ENCODE measurements at regions of chr6 and their contacts with region 1.

Region 1: DNA sequence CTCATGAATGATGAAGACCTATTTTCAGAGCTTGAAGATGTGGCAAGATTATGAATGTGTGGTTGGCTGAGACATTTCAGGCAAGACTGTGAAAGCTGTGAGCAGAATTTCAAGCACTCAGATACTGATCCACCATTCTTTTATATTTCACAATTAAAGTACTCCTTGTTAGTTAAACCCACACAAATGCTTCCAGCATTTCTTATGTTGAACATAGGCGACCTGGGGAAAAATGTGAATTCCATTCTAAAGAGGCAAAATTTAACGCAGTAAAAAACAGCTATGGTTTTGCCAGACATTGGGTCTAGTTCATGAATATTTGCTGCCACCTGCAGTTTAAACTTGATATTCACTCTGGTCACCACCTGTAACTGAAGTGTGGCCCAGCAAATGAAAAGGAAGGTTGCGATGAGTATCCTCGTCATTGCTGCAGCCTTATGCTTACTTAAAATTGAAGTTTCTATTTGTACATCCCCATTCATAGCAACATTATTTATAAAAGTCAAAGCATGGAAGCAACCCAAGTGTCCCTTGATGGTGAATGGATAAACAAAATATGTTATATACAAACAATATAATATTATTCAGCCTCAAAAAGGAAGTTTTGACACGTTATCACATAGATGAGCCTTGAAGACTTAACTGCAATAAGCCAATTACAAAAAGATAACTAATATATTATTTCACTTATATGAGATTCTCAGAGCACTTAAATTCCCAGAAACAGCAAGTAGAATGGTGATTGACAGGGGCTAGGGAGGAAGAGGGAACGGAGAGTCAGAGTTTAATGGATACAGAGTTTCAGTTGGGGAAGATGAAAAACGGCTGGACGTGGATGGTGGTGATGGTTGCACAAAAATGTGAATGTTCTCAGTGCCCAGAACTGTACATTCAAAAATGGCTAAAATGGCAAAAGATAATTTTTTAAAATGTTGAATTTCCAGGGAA is 32.4 kb upstream of the FAM184A start:
- DNase-seq: peak; percentile 59
- ATAC-seq: peak; percentile 85
- H3K4me3 Mint-ChIP-seq: no peak overlapping the region
- H3K27ac Mint-ChIP-seq: no peak overlapping the region
- H3K4me1 Mint-ChIP-seq: peaks cover 17% of the 10 kb centered on the region
- H3K27me3 Mint-ChIP-seq: peaks cover 4% of the 10 kb centered on the region

Region 2: GRCh38 chr6:118918326-118918725 is 192.5 kb before region 1 on chr6:
- CTCF ChIA-PET with region 1: no interaction called
- DNase-seq: no peak
- ATAC-seq: no peak
- H3K4me3 Mint-ChIP-seq: no peak overlapping the region
- H3K27ac Mint-ChIP-seq: no peak overlapping the region
- H3K4me1 Mint-ChIP-seq: peaks cover 3% of the 10 kb centered on the region
- H3K27me3 Mint-ChIP-seq: no peaks in the 10 kb centered on the region

Region 3: DNA sequence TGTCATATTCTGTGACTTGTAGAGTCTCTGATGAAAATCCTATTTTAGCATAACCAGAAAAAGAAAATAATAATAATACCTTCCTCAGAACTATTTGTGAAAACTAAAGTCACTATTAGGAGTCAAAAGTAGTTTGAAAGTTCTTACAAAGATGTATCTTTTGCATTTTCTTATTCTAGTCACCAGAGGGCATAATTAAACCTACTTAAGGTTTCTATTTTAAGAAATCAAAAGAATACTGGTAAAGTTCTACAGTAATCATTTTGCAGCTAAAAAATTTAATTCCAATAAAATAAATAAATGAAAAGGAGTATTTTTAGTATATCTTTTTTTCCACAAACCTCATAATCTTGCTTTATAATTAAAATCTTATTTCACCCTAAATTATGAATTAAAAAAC is 147.9 kb before region 1 on chr6:
- CTCF ChIA-PET with region 1: interaction called, 34 read pairs
- DNase-seq: no peak
- ATAC-seq: no peak
- H3K4me3 Mint-ChIP-seq: no peak overlapping the region
- H3K27ac Mint-ChIP-seq: no peak overlapping the region
- H3K4me1 Mint-ChIP-seq: peaks cover 12% of the 10 kb centered on the region
- H3K27me3 Mint-ChIP-seq: no peaks in the 10 kb centered on the region

Region 4: DNA sequence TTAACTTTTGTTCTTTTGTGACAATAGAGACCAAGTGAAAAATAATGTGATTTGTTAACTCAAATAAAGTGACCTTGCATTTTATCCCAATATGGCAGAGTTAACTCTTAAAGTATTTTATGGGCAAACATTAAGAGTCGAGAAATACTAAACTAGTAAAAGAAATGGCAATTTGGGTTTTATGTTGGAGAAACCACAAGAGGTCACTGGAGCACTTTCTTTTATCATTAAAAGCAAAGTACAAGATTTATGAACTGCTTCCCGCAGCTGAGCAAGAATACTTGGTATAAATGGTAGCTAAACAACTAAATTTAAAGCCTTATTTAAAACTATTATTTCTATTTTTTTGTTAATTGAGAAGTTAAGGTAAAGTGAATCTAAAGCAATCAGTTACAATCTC is 142.5 kb before region 1 on chr6:
- CTCF ChIA-PET with region 1: interaction called, 34 read pairs
- DNase-seq: no peak
- ATAC-seq: no peak
- H3K4me3 Mint-ChIP-seq: no peak overlapping the region
- H3K27ac Mint-ChIP-seq: no peak overlapping the region
- H3K4me1 Mint-ChIP-seq: no peaks in the 10 kb centered on the region
- H3K27me3 Mint-ChIP-seq: no peaks in the 10 kb centered on the region

Region 5: DNA sequence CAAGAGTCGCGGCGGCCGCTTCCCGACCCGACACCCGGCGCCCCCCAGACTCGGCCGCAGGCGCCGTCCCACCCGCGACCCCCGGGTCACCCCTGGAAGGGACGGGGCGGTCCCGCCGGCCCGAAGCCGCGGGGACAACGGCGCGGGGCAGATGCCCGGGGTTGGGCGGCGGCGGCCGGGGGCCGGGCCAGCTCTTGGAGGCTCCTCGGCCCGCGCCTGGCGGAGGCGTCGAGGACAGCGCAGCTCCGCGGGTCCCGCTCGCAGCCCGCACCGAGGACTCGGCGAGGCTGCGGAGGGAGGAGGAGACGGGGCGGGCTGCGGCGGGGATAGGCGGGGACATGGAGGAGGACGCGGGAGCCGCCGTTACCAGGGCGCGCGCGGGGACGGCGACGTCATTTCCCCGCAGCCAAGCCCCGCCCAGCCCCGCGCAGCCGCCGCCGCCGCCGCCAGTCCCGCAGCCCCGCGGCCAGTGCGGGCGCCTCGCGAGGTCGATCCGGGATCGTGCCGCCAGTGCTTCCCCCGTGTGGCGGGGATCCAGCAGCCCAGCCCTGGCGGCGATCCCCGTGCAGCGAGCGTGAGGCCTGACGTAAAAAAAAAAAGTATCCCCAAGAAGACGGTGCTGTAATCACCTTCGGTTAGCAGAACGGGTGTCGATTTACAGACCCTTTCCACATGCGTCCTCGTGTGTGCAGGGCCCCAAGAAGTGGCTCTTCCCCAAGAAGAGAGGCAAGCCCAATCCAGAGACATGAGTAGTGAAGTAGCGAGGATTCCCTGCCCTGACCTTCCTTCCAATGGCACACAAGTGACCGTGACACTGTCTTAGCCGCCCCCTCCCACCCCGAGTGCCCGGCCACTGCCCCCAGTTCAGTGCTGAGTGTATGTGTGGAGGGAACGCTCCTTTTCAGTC is 32.2 kb before region 1 on chr6 and contains the start of gene FAM184A:
- CTCF ChIA-PET with region 1: interaction called, 10 read pairs
- DNase-seq: peak; percentile 73
- ATAC-seq: peak; percentile 81
- H3K4me3 Mint-ChIP-seq: peak within 1 kb of the TSS; percentile 80
- H3K27ac Mint-ChIP-seq: peak within 1 kb of the TSS; percentile 79
- H3K4me1 Mint-ChIP-seq: peaks cover 27% of the 10 kb centered on the region
- H3K27me3 Mint-ChIP-seq: peaks cover 21% of the 10 kb centered on the region
- total RNA-seq, gene FAM184A: 3.7 to 6.0 TPM

Region 6: DNA sequence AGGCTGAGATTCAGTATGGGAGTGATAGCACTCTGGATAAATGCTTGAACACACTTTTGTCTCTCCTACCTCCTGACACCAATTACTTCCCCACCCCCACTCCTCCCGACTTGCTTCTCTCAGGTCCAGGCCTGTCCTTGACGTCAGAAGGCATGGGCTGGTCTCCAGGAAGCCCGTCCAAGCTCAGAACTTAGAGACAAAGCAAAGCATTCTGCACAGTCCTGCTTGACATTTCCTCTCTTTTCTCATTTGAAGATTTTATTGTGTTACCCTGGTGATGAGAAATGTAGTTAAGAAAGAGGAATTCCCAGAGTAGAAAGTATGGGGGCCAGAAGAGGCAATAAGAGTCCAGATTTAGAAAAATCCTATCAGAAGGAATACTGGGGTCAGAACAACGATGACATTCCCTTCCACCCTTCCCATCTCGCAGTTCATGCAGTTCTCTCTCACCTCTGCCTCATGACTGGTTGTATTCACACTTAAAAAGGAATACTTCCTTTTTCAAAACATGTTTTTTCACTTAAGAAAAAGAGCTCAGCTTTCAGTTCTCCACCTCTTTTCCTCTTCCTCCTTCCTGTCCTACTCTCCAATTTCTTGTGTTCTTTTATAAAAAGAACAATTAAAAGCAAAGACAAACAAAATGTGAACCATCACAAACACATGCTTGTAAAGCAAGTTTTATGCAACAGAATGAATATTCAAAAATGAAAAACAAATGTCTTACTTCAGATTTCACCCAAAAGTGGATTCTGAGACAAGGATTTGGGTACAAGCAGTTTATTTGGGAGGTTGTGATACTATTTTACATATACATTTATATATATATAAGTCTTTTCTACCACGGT is 13.9 kb before region 1 on chr6:
- CTCF ChIA-PET with region 1: interaction called, 11 read pairs
- DNase-seq: no peak
- ATAC-seq: no peak
- H3K4me3 Mint-ChIP-seq: no peak overlapping the region
- H3K27ac Mint-ChIP-seq: no peak overlapping the region
- H3K4me1 Mint-ChIP-seq: peaks cover 7% of the 10 kb centered on the region
- H3K27me3 Mint-ChIP-seq: peaks cover 5% of the 10 kb centered on the region

Measured in activated CD8-positive, alpha-beta memory T cell treated with anti-CD3 and anti-CD28 coated beads, Interleukin-2, amount 10 ng/mL, durations not matched to agents 7 days and 5 days (primary cell).